Caco-2 (cell line): ENCODE measurements at regions of chr5 and their contacts with region 1.

Region 1: DNA sequence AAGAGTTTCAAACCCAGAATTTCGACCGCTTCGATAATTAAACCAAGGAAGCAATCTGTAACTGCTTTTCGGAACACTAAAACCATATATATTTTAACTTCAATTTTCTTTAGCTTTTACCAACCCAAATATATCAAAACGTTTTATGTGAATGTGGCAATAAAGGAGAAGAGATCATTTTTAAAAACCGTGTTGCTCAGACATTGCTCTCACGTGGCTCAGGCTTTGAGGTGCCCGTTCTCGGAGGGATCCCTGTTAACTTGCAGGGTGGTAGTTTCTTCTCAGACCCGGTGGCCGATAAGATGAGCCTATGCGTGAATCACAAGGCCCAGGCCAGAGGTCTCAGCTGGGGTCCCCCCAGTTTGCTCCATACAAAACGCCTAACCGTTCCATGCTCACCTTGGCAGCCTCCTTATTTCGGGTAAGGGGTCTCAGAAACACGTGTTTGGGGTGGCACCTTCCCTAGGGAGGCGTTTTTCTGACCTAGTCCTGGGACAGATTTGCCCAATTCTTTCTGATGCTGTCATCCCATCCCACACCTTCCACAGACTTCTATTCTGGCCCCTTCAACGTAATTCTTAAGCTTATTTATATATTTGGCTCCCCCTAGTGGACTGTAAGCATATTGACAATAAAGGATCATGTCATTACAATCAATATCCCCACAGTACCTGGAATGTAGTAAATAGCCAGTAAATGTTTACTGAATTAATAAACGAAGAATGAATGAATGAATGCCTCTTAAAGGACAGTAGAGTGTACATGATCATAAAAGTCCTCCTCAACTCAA is 48.1 kb downstream of the THBS4 start:
- DNase-seq: peak in 1 of 2 experiments; percentile 28
- H3K4me3 ChIP-seq: no peak overlapping the region
- H3K4me3 Mint-ChIP-seq: no peak overlapping the region
- H3K27ac Mint-ChIP-seq: no peak overlapping the region
- H3K4me1 ChIP-seq: no peaks in the 10 kb centered on the region
- H3K4me1 Mint-ChIP-seq: no peaks in the 10 kb centered on the region
- H3K27me3 ChIP-seq: no peaks in the 10 kb centered on the region
- H3K27me3 Mint-ChIP-seq: no peaks in the 10 kb centered on the region
- CTCF ChIP-seq: peak; percentile 62 to 68

Region 2: DNA sequence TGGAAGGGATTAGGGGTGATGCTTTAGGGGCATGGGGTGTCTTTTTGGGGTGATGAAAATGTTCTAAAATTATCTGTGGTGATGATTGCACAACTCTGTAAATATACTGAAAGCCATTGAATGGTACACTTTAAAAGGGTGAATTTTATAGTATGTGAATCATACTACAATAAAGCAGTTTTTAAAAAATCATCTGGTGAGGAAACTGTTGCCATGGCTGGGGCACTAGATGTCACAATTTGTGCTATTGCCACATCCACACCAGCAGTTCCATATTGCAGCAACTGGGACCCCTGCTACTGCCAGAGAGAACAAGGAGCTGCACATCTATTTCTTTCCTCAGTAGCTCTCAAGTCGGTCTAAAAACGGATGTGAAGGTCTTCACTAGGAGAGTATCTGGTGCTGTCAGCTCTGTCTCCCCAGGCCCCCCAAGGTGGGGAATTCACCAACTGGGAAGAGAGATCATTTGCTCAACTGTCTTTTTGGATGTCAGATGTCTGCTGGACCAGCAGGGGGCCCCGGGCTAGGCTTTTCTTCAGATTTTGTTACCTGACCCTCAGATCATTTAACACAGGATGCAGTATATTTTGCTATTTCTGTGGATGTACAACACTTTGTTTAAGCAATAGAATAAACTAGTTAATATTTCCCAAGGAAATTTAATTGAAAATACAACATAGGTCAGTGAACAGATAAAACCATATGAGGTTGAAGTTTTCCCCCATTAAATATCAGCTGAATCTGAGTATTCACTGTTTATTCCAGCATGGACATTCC is 380.5 kb before region 1 on chr5:
- CTCF ChIA-PET with region 1: no interaction called
- POLR2A ChIA-PET with region 1: no interaction called
- intact Hi-C with region 1: loop called (anchors 1 kb)
- DNase-seq: peak in 1 of 2 experiments; percentile 49
- H3K4me3 ChIP-seq: no peak overlapping the region
- H3K4me3 Mint-ChIP-seq: no peak overlapping the region
- H3K27ac Mint-ChIP-seq: no peak overlapping the region
- H3K4me1 ChIP-seq: 0 out of 2 replicates have a peak, but pooled peaks cover 5% of the 10 kb centered on the region
- H3K4me1 Mint-ChIP-seq: no peaks in the 10 kb centered on the region
- H3K27me3 ChIP-seq: no peaks in the 10 kb centered on the region
- H3K27me3 Mint-ChIP-seq: no peaks in the 10 kb centered on the region
- CTCF ChIP-seq: peak; percentile 71 to 80

Region 3: DNA sequence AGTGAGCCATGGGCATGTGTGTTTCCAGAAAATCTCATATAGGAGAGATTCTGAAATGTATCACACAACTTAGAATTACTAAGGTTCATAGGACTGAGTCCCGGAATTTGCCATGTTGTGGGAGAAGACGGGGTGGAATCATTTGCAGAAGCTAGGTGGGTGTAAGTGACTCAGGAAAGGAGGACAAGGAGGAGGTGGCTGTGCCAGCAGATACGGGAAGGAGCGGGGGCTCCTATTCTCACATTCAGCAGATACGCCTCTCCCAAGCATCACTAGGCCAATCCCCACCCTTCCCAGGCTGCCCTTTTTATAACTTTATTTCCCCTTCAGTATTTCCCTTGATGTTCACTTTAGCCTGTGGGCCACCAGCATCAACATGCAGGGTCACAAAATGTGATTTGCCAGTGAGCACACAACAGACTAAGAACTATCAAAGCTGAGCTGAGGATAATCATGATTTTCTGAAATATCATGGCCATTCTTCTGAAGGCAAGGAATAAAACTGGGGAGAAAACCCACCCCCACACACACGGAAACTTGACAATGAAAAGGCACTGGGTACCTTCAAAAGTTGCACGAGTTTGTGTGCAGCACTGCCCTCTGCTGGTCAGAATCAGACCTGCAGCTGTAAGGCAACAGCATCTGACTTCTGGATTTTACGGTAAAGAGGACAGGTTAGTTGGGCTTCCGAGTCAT is 225.4 kb before region 1 on chr5:
- CTCF ChIA-PET with region 1: interaction called, 3 read pairs
- POLR2A ChIA-PET with region 1: no interaction called
- intact Hi-C with region 1: loop called (anchors 2 kb)
- DNase-seq: peak; percentile 60 to 81
- H3K4me3 ChIP-seq: no peak overlapping the region
- H3K4me3 Mint-ChIP-seq: no peak overlapping the region
- H3K27ac Mint-ChIP-seq: no peak overlapping the region
- H3K4me1 ChIP-seq: no peaks in the 10 kb centered on the region
- H3K4me1 Mint-ChIP-seq: no peaks in the 10 kb centered on the region
- H3K27me3 ChIP-seq: no peaks in the 10 kb centered on the region; the same call in 1 of the 2 replicates
- H3K27me3 Mint-ChIP-seq: no peaks in the 10 kb centered on the region
- CTCF ChIP-seq: peak; percentile 94 to 95

Region 4: DNA sequence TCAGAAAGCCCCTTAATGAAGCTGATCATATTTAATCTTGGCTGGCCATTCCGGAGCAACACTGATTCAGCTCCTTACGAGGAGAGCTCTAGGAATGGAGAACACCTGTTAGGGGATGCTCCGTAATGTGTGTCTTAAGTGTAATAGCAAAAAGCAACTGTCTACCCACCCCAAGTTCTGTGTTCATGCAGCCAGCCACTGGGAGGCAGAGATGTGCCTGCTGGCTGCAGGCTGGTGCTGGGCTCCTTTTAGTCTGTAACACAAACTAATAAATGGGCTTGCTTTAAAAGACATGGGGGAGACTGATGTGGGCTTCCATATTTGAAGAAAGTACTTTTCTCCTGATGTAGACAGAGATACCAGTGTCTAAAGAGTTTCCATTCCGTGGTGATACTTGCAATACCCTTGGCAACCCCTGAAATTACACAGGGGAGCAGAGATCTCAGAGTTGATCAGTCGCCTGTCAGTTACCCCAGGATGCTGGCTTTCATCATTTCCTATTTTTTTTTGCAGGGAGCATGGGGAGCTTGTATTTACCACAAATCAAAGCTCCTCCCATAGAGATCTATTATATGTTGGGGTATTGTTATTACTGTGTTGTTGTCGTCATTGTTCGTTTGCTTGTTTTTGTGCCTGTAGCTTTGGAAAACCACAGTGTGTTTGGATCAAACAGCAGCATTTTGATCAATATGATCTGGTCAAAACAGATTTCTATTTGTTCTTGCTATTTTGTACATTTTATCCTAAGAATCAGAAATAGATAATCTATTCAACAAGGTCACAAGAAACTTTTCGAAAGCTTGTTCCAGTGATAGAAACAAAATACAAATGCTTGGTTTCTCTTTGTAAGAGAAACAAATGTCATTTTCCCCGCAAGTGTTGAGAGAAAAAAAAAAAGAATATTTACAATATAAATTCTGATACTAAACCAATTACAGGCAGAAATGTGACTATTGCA is 158.1 kb before region 1 on chr5:
- CTCF ChIA-PET with region 1: no interaction called
- POLR2A ChIA-PET with region 1: no interaction called
- intact Hi-C with region 1: loop called (anchors 1 kb)
- DNase-seq: peak in 1 of 2 experiments; percentile 12
- H3K4me3 ChIP-seq: no peak overlapping the region
- H3K4me3 Mint-ChIP-seq: no peak overlapping the region
- H3K27ac Mint-ChIP-seq: no peak overlapping the region
- H3K4me1 ChIP-seq: no peaks in the 10 kb centered on the region
- H3K4me1 Mint-ChIP-seq: no peaks in the 10 kb centered on the region
- H3K27me3 ChIP-seq: no peaks in the 10 kb centered on the region
- H3K27me3 Mint-ChIP-seq: no peaks in the 10 kb centered on the region
- CTCF ChIP-seq: peak in 1 of 2 experiments; percentile 33

Region 5: GRCh38 chr5:79971156-79971555 is 112.1 kb before region 1 on chr5:
- CTCF ChIA-PET with region 1: no interaction called
- POLR2A ChIA-PET with region 1: no interaction called
- intact Hi-C with region 1: no loop called
- DNase-seq: no peak
- H3K4me3 ChIP-seq: no peak overlapping the region
- H3K4me3 Mint-ChIP-seq: no peak overlapping the region
- H3K27ac Mint-ChIP-seq: no peak overlapping the region
- H3K4me1 ChIP-seq: peaks cover 12% of the 10 kb centered on the region
- H3K4me1 Mint-ChIP-seq: peaks cover 24% of the 10 kb centered on the region
- H3K27me3 ChIP-seq: no peaks in the 10 kb centered on the region
- H3K27me3 Mint-ChIP-seq: peaks cover 4% of the 10 kb centered on the region
- CTCF ChIP-seq: no peak

Region 6: DNA sequence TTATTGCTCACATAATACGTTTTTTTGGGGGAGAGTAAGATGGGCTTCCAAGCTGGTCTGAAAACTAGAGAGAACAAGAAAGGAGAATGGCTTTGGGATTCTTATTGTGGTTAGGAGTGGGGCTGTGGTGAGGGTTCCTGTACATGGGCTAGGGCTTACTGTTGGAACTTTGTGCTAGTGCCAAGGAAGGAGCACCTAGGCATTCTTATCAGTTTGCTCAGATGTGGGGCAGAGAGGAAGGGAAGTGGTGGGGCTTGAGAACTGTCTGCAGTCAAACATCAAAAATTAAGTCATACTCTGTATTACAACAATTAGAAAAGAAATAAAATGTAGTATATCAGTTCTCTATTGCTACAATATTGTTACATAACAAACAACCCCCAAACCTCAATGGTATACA is 52.2 kb before region 1 on chr5:
- CTCF ChIA-PET with region 1: interaction called, 11 read pairs
- POLR2A ChIA-PET with region 1: no interaction called
- intact Hi-C with region 1: no loop called
- DNase-seq: no peak
- H3K4me3 ChIP-seq: no peak overlapping the region
- H3K4me3 Mint-ChIP-seq: no peak overlapping the region
- H3K27ac Mint-ChIP-seq: no peak overlapping the region
- H3K4me1 ChIP-seq: no peaks in the 10 kb centered on the region
- H3K4me1 Mint-ChIP-seq: no peaks in the 10 kb centered on the region
- H3K27me3 ChIP-seq: no peaks in the 10 kb centered on the region
- H3K27me3 Mint-ChIP-seq: peaks cover 9% of the 10 kb centered on the region
- CTCF ChIP-seq: no peak

Region 7: DNA sequence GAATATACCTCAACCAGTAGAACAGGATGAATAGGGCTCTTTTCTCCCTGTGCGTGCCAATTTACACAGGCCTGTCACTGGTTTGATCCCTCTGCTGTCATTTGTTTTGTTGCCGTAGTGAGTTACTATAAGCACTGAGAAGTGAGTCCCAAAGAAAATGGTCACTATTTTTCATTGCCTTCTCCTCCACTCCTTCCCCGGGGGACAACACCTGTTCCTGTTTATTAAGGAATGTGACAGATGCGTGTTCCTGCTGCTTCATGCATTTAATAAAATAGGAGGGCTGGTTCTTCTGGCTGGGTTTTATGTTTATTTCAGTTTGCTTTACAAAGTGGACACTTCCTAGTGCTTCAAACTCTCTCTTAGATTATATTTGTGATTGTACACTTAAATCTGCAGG is 41.8 kb before region 1 on chr5:
- CTCF ChIA-PET with region 1: interaction called, 12 read pairs
- POLR2A ChIA-PET with region 1: interaction called, 3 read pairs
- intact Hi-C with region 1: no loop called
- DNase-seq: no peak
- H3K4me3 ChIP-seq: no peak overlapping the region
- H3K4me3 Mint-ChIP-seq: no peak overlapping the region
- H3K27ac Mint-ChIP-seq: no peak overlapping the region
- H3K4me1 ChIP-seq: no peaks in the 10 kb centered on the region
- H3K4me1 Mint-ChIP-seq: no peaks in the 10 kb centered on the region
- H3K27me3 ChIP-seq: no peaks in the 10 kb centered on the region
- H3K27me3 Mint-ChIP-seq: peaks cover 13% of the 10 kb centered on the region
- CTCF ChIP-seq: no peak

Region 8: GRCh38 chr5:80119372-80119771 is 36.1 kb after region 1 on chr5:
- CTCF ChIA-PET with region 1: no interaction called
- POLR2A ChIA-PET with region 1: no interaction called
- intact Hi-C with region 1: no loop called
- DNase-seq: no peak
- H3K4me3 ChIP-seq: no peak overlapping the region
- H3K4me3 Mint-ChIP-seq: no peak overlapping the region
- H3K27ac Mint-ChIP-seq: no peak overlapping the region
- H3K4me1 ChIP-seq: no peaks in the 10 kb centered on the region
- H3K4me1 Mint-ChIP-seq: no peaks in the 10 kb centered on the region
- H3K27me3 ChIP-seq: no peaks in the 10 kb centered on the region
- H3K27me3 Mint-ChIP-seq: no peaks in the 10 kb centered on the region
- CTCF ChIP-seq: no peak